ENCODE measurements at regions of chr13 and their contacts with region 1.

Region 1: GRCh38 chr13:48448959-48449614 is 36.2 kb upstream of the LPAR6 start:
- DNase-seq: no peak
- ATAC-seq: no peak
- H3K4me3 ChIP-seq: no peak overlapping the region
- H3K4me3 Mint-ChIP-seq: no peak overlapping the region
- H3K27ac ChIP-seq: no peak overlapping the region
- H3K27ac Mint-ChIP-seq: no peak overlapping the region
- H3K4me1 ChIP-seq: no peaks in the 10 kb centered on the region
- H3K4me1 Mint-ChIP-seq: peaks cover 6% of the 10 kb centered on the region
- H3K27me3 ChIP-seq: no peaks in the 10 kb centered on the region
- H3K27me3 Mint-ChIP-seq: no peaks in the 10 kb centered on the region
- CTCF ChIP-seq: no peak

Region 2: DNA sequence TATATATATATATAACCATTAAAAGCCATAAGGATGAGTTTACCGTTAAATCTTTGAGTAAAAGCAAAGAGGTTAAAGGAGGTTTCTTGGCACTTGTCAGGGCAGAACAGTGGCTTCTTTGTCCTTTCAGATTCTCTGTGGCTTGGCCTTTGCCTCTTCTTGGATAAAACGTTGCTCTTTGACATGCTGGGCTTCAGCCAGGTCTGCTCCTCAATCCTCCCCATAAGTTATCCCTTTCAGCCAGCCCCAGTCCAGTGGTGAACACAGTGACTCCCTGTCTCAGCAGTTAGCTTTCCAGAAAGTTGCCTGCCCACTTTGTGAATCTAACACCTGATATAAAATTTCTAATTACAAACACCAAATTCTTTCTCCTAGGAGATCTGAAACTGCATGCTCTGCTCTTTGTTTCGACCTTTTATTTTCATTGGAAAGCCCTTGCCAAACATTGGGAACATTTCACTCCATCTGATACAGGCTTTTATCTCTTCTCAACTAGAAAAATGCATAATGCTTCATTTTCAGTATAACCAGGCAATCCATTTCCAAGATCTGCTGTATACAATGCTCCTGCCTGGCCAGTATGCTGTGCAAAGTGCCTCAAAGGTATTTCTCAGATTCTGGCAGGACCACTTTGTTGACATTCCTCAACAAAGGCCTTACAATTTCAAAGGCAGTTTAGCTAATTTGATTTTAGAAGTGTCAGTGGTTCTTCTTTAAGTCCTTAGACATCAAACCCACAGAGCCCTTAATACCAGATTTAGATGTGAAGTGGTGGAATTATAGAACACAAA is 338.0 kb before region 1 on chr13:
- CTCF ChIA-PET with region 1: no interaction called
- POLR2A ChIA-PET with region 1: no interaction called
- intact Hi-C with region 1: no loop called
- DNase-seq: no peak
- ATAC-seq: no peak
- H3K4me3 ChIP-seq: no peak overlapping the region
- H3K4me3 Mint-ChIP-seq: no peak overlapping the region
- H3K27ac ChIP-seq: no peak overlapping the region
- H3K27ac Mint-ChIP-seq: no peak overlapping the region
- H3K4me1 ChIP-seq: no peaks in the 10 kb centered on the region
- H3K4me1 Mint-ChIP-seq: no peaks in the 10 kb centered on the region
- H3K27me3 ChIP-seq: peaks cover 0 to 7% (median 0%) of the 10 kb centered on the region in 4 experiments
- H3K27me3 Mint-ChIP-seq: peaks cover 38% of the 10 kb centered on the region
- CTCF ChIP-seq: no peak

Region 3: GRCh38 chr13:48412881-48413351 is 36.2 kb before region 1 on chr13 and contains the start of gene LPAR6:
- CTCF ChIA-PET with region 1: no interaction called
- POLR2A ChIA-PET with region 1: no interaction called
- intact Hi-C with region 1: loop called (anchors 5 kb)
- DNase-seq: no peak
- ATAC-seq: no peak
- H3K4me3 ChIP-seq: peak within 1 kb of the TSS in 2 of 5 experiments; percentile 36 to 65
- H3K4me3 Mint-ChIP-seq: peak within 1 kb of the TSS; percentile 78
- H3K27ac ChIP-seq: peak within 1 kb of the TSS in 1 of 2 donors; percentile 30
- H3K27ac Mint-ChIP-seq: no peak within 1 kb of the TSS
- H3K4me1 ChIP-seq: peaks cover 0 to 10% of the 10 kb centered on the region in 2 donors
- H3K4me1 Mint-ChIP-seq: peaks cover 14% of the 10 kb centered on the region
- H3K27me3 ChIP-seq: no peaks in the 10 kb centered on the region
- H3K27me3 Mint-ChIP-seq: no peaks in the 10 kb centered on the region
- CTCF ChIP-seq: no peak
- total RNA-seq, gene LPAR6: 0.80 and 1.0 TPM in 2 replicates